Aorta (tissue), 5 donors: ENCODE measurements at regions of chr18 and their contacts with region 1.

Region 1: GRCh38 chr18:72261590-72261989 is 282.6 kb downstream of the CBLN2 start:
- DNase-seq: no peak
- ATAC-seq: no peak
- H3K4me3 ChIP-seq: no peak overlapping the region
- H3K27ac ChIP-seq: no peak overlapping the region
- H3K4me1 ChIP-seq: no peaks in the 10 kb centered on the region
- H3K27me3 ChIP-seq: no peaks in the 10 kb centered on the region

Region 2: GRCh38 chr18:72174972-72175649 is 86.5 kb before region 1 on chr18:
- intact Hi-C with region 1: loop called in 1 of 2 experiments (anchors 10 kb)
- DNase-seq: no peak
- ATAC-seq: no peak
- H3K4me3 ChIP-seq: no peak overlapping the region
- H3K27ac ChIP-seq: no peak overlapping the region
- H3K4me1 ChIP-seq: no peaks in the 10 kb centered on the region
- H3K27me3 ChIP-seq: no peaks in the 10 kb centered on the region